CD8-positive, alpha-beta T cell (primary cell): ENCODE measurements at regions of chr16 and their contacts with region 1.

Region 1: DNA sequence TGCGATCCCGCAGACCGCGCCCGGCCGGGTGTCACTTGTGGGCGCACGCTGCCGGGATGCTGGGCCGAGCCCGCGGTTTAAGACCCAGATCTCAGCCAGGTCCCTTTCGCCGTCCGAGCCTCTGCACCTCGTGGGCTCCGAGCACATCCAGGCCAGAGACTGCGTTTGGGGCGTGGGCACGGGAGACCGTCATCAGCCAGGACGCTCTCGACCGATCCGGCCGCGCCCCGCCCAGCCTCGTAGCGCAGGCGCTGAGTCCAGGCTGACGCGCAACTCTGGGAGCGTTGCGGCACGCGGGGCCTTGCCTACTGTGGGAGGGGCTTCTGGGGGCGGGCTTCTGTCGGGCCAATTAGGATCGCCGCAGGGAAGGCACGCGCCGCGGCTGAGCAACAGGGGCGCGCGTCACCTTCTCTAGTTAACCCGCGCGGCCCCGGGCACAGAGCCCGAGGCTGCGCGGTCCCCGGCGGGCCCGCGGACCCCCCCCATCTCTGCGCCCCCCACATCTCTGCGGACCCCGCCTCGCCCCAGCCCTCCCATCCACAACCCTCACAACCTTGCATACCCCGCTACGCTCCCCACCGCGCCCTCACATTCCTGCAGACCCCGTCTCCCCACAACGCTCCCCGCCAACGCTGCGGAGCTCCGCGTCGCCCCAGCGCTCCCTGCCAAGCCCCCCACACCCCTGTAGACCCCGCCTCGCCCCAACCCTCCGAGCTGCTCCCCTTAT is 722 bp upstream of the CEMP1 start:
- DNase-seq: peak; percentile 93 to 98 (median 97)
- ATAC-seq: peak; percentile 87
- H3K4me3 ChIP-seq: peak overlapping the region; percentile 75 to 92
- H3K4me3 Mint-ChIP-seq: peak overlapping the region; percentile 98
- H3K27ac ChIP-seq: peak overlapping the region; percentile 91 to 99
- H3K27ac Mint-ChIP-seq: peak overlapping the region; percentile 100
- H3K4me1 ChIP-seq: peaks cover 13% of the 10 kb centered on the region
- H3K4me1 Mint-ChIP-seq: peaks cover 20% of the 10 kb centered on the region
- H3K27me3 ChIP-seq: no peaks in the 10 kb centered on the region
- H3K27me3 Mint-ChIP-seq: no peaks in the 10 kb centered on the region
- CTCF ChIP-seq: no peak

Region 2: GRCh38 chr16:1026057-1026783 is 1505.7 kb before region 1 on chr16:
- CTCF ChIA-PET with region 1: no interaction called
- POLR2A ChIA-PET with region 1: no interaction called
- intact Hi-C with region 1: no loop called
- DNase-seq: no peak
- ATAC-seq: no peak
- H3K4me3 ChIP-seq: no peak overlapping the region
- H3K4me3 Mint-ChIP-seq: no peak overlapping the region
- H3K27ac ChIP-seq: no peak overlapping the region
- H3K27ac Mint-ChIP-seq: no peak overlapping the region
- H3K4me1 ChIP-seq: no peaks in the 10 kb centered on the region
- H3K4me1 Mint-ChIP-seq: peaks cover 2% of the 10 kb centered on the region
- H3K27me3 ChIP-seq: peaks cover 0 to 11% of the 10 kb centered on the region in 2 experiments
- H3K27me3 Mint-ChIP-seq: peaks cover 9% of the 10 kb centered on the region
- CTCF ChIP-seq: no peak

Region 3: DNA sequence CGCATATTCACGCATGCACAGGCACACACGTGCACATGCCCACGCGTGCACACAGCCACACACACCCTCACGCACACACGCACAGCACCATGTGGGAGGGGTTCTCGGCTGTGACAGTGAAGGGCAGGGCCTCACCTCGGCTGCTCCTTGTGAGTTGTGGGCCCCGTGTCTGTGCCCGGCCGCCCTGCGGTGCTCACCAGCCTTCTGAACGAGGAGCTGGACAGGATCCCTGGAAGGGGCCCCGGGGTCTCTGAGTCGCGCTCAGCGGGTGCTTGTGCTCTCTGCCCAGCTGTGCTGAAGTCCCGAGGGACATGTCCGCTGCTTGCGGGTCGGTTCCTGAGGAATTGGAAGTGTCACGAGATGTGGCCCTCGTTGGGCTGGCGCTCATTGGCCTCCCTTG is 468.1 kb before region 1 on chr16:
- CTCF ChIA-PET with region 1: no interaction called
- POLR2A ChIA-PET with region 1: no interaction called
- intact Hi-C with region 1: no loop called
- DNase-seq: no peak
- ATAC-seq: no peak
- H3K4me3 ChIP-seq: no peak overlapping the region
- H3K4me3 Mint-ChIP-seq: no peak overlapping the region
- H3K27ac ChIP-seq: no peak overlapping the region
- H3K27ac Mint-ChIP-seq: no peak overlapping the region
- H3K4me1 ChIP-seq: no peaks in the 10 kb centered on the region
- H3K4me1 Mint-ChIP-seq: no peaks in the 10 kb centered on the region
- H3K27me3 ChIP-seq: no peaks in the 10 kb centered on the region
- H3K27me3 Mint-ChIP-seq: no peaks in the 10 kb centered on the region
- CTCF ChIP-seq: no peak

Region 4: GRCh38 chr16:2267913-2268666 is 263.8 kb before region 1 on chr16 and contains the start of gene RNPS1:
- CTCF ChIA-PET with region 1: no interaction called
- POLR2A ChIA-PET with region 1: no interaction called
- intact Hi-C with region 1: loop called in 1 of 2 experiments (anchors 1 kb)
- DNase-seq: peak; percentile 90 to 99 (median 97)
- ATAC-seq: peak; percentile 81
- H3K4me3 ChIP-seq: peak within 1 kb of the TSS; percentile 94 to 100
- H3K4me3 Mint-ChIP-seq: peak within 1 kb of the TSS; percentile 96
- H3K27ac ChIP-seq: peak within 1 kb of the TSS; percentile 96 to 99
- H3K27ac Mint-ChIP-seq: peak within 1 kb of the TSS; percentile 97
- H3K4me1 ChIP-seq: peaks cover 30% of the 10 kb centered on the region
- H3K4me1 Mint-ChIP-seq: peaks cover 34% of the 10 kb centered on the region
- H3K27me3 ChIP-seq: no peaks in the 10 kb centered on the region
- H3K27me3 Mint-ChIP-seq: no peaks in the 10 kb centered on the region
- CTCF ChIP-seq: no peak
- total RNA-seq, gene RNPS1: 239 to 246 TPM

Region 5: DNA sequence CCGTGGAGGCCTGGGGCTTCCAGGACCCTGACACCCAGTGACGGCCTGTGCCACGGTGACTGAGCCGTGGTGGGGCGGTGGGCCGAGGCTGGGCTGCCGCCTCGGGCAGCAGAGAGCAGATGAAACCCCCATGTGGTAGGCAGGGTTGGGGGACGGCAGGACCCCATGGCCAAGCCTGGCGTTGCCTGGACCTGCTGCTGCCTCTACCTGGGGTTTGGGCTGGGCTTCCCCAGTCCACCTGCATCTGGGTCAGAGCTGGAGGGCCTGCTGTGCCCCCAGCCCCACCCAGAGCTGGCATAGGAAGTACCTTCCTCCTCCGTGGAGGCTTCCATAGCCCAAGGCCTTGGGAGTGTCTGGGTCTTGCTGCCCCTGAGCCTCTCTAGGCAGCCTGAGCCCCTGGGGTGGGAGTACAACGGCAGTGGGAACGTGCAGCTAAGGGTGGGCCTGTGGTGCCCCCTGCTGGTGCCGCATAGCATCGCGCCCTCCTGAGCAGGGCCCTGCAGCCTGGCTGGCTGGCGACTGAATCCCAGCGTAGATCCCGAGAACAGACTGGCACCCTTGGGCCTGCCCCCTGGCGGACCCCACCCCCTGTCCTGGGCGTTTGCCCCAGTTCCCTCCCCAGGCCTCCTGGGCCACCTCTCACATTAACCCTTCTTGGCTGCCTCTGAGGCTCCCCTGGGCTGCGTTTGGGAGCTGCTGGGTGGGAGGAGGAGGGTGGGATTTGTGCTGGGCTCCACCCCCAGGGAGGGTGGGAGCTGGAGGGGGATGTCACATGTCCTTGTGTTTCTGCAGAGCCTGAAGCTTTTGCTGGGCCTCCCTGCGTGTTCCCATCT is 30.8 kb before region 1 on chr16:
- CTCF ChIA-PET with region 1: interaction called, 5 read pairs
- POLR2A ChIA-PET with region 1: no interaction called
- intact Hi-C with region 1: loop called in 1 of 2 experiments (anchors 1 kb)
- DNase-seq: peak; percentile 67 to 89 (median 80)
- ATAC-seq: peak; percentile 100
- H3K4me3 ChIP-seq: no peak overlapping the region
- H3K4me3 Mint-ChIP-seq: no peak overlapping the region
- H3K27ac ChIP-seq: no peak overlapping the region
- H3K27ac Mint-ChIP-seq: no peak overlapping the region
- H3K4me1 ChIP-seq: peaks cover 6% of the 10 kb centered on the region
- H3K4me1 Mint-ChIP-seq: peaks cover 2% of the 10 kb centered on the region
- H3K27me3 ChIP-seq: no peaks in the 10 kb centered on the region
- H3K27me3 Mint-ChIP-seq: no peaks in the 10 kb centered on the region
- CTCF ChIP-seq: peak; percentile 87

Region 6: DNA sequence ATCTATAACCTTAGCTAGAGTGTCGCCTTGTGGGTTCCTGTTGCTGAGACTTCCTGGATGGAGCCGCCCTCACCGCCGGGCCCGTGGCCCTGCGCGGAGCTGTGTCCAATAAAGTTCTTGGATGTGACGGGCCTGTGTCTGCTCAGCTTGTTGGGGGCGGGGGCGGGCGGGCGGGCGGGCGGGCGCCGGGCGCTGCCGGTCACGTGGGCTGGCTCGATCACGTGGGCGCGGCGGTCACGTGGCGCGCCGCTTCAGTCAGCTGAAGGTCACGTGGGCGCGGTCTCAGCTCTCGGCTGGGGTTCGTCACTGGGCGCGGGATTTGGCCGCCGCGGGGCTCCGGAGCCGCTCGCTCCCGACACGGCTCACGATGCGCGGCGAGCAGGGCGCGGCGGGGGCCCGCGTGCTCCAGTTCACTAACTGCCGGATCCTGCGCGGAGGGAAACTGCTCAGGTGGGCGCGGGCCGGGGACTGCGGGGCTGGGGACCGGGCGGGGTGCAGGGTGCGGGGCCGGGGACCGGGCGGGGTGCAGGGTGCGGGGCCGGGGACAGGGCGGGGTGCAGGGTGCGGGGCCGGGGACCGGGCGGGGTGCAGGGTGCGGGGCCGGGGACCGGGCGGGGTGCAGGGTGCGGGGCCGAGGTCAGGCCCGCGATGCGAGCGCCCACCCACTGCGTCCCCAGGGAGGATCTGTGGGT is 11.7 kb before region 1 on chr16 and contains the start of gene AMDHD2:
- CTCF ChIA-PET with region 1: interaction called, 6 read pairs
- POLR2A ChIA-PET with region 1: interaction called, 59 read pairs
- intact Hi-C with region 1: loop called (anchors 1 kb)
- DNase-seq: peak; percentile 82 to 96 (median 89)
- ATAC-seq: peak; percentile 63
- H3K4me3 ChIP-seq: peak within 1 kb of the TSS; percentile 32 to 68
- H3K4me3 Mint-ChIP-seq: peak within 1 kb of the TSS; percentile 94
- H3K27ac ChIP-seq: peak within 1 kb of the TSS; percentile 58 to 76
- H3K27ac Mint-ChIP-seq: peak within 1 kb of the TSS; percentile 98
- H3K4me1 ChIP-seq: peaks cover 55% of the 10 kb centered on the region
- H3K4me1 Mint-ChIP-seq: peaks cover 60% of the 10 kb centered on the region
- H3K27me3 ChIP-seq: no peaks in the 10 kb centered on the region
- H3K27me3 Mint-ChIP-seq: no peaks in the 10 kb centered on the region
- CTCF ChIP-seq: no peak
- total RNA-seq, gene AMDHD2: 212 to 226 TPM

Region 7: DNA sequence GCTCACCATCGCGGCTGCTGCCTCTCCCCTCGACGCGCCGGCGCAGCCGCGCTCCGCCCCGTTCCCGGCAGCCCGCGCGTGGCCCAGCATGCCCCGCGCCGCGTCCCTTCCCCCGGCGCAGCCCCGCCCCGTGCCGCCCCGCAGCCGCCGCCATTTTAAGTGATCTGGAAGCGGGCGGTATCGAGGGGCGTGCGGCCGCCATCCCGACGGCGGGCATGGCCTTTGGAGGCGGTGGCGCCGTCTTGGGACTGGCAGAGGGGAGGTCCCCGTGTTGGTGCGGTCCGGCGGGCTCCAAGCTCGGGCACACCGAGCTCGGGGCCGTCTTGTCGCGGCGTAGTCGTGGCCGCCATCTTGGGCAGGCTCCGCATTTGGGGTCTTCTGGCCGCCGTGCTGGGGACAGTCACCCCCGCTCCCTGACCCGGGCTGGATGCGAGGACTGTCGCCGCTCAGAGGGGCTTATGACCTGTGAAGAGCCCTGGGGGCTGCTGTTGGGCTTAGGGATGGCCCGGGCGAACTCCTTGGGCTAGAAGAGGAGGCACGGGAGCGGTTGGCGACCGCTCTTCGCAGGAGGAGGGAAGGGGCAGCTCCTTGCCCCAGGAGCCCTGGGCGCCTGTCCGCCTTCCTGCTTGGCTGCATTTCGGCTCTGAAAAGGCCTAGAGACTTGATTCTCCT is 245.4 kb after region 1 on chr16 and contains the start of gene ELOB:
- CTCF ChIA-PET with region 1: no interaction called
- POLR2A ChIA-PET with region 1: no interaction called
- intact Hi-C with region 1: loop called in 1 of 2 experiments (anchors 5 kb)
- DNase-seq: peak; percentile 78 to 94 (median 88)
- ATAC-seq: peak; percentile 90
- H3K4me3 ChIP-seq: peak within 1 kb of the TSS; percentile 84 to 92
- H3K4me3 Mint-ChIP-seq: peak within 1 kb of the TSS; percentile 95
- H3K27ac ChIP-seq: peak within 1 kb of the TSS; percentile 96 to 99
- H3K27ac Mint-ChIP-seq: peak within 1 kb of the TSS; percentile 98
- H3K4me1 ChIP-seq: peaks cover 30% of the 10 kb centered on the region
- H3K4me1 Mint-ChIP-seq: peaks cover 50% of the 10 kb centered on the region
- H3K27me3 ChIP-seq: no peaks in the 10 kb centered on the region
- H3K27me3 Mint-ChIP-seq: no peaks in the 10 kb centered on the region
- CTCF ChIP-seq: no peak
- total RNA-seq, gene ELOB: 70.3 to 71.5 TPM

Region 8: GRCh38 chr16:3880623-3881498 is 1348.9 kb after region 1 on chr16 and contains the start of gene CREBBP:
- CTCF ChIA-PET with region 1: no interaction called
- POLR2A ChIA-PET with region 1: no interaction called
- intact Hi-C with region 1: loop called in 1 of 2 experiments (anchors 10 kb)
- DNase-seq: peak; percentile 80 to 95 (median 87)
- ATAC-seq: peak; percentile 84
- H3K4me3 ChIP-seq: peak within 1 kb of the TSS; percentile 70 to 80
- H3K4me3 Mint-ChIP-seq: peak within 1 kb of the TSS; percentile 88
- H3K27ac ChIP-seq: peak within 1 kb of the TSS in 1 of 2 experiments; percentile 71
- H3K27ac Mint-ChIP-seq: peak within 1 kb of the TSS; percentile 94
- H3K4me1 ChIP-seq: peaks cover 32% of the 10 kb centered on the region
- H3K4me1 Mint-ChIP-seq: peaks cover 38% of the 10 kb centered on the region
- H3K27me3 ChIP-seq: no peaks in the 10 kb centered on the region
- H3K27me3 Mint-ChIP-seq: peaks cover 2% of the 10 kb centered on the region
- CTCF ChIP-seq: no peak
- total RNA-seq, gene CREBBP: 186 to 189 TPM